ENCODE measurements at regions of chr19 and their contacts with region 1.

Region 1: DNA sequence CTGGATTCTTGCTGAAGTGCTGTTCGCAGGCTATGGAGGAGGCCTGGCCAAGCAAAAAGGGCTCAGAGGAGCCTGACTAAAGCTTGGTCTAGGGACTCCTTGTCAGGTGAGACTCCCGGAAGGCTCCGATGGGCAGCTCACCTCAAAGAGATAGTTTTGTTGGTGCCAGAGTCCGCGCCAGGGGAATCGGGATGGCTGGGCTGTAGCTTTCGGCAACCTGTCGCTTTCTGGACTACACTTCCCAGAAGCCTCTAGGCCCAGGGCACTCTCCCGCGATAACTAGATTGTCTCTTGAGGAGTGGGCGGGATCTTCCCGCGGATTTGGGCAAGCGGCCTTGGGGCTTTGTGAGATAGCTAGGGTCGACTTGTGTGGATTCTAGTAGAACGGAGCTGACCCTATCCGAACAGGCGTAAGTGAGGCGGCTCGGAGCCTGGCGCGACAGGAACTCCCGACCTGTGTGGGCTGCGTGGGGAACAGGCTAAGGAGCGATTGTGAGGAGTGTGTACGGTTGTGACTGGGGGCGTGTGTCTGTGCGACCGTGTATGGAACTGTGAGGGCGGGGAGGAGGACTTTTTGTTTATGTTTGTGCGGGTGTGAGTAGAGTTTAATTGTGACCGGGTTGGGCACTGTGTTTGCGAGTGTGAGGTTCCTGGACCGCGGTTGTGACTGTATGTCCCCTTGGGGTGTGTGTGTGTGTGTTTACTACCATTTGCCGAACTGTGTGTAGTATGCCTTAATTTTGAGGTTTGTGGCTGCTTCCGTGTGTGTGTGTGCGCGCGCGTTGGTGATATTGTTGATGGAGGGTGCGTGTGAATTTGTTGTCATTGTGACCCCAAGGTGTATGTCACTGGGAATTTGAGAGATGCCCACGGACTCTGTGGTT is at the start of gene ZNF345:
- DNase-seq: peak; percentile 93
- ATAC-seq: peak; percentile 82
- H3K4me3 ChIP-seq: peak within 1 kb of the TSS; percentile 92 to 100 (median 93)
- H3K4me3 Mint-ChIP-seq: no peak within 1 kb of the TSS
- H3K27ac ChIP-seq: peak within 1 kb of the TSS; percentile 74 to 84
- H3K27ac Mint-ChIP-seq: no peak within 1 kb of the TSS
- H3K4me1 ChIP-seq: peaks cover 16 to 20% of the 10 kb centered on the region in 2 donors
- H3K4me1 Mint-ChIP-seq: peaks cover 5% of the 10 kb centered on the region
- H3K27me3 ChIP-seq: no peaks in the 10 kb centered on the region
- H3K27me3 Mint-ChIP-seq: no peaks in the 10 kb centered on the region
- CTCF ChIP-seq: no peak
- total RNA-seq, gene ZNF345: 17.7 and 19.5 TPM in 2 replicates

Region 2: DNA sequence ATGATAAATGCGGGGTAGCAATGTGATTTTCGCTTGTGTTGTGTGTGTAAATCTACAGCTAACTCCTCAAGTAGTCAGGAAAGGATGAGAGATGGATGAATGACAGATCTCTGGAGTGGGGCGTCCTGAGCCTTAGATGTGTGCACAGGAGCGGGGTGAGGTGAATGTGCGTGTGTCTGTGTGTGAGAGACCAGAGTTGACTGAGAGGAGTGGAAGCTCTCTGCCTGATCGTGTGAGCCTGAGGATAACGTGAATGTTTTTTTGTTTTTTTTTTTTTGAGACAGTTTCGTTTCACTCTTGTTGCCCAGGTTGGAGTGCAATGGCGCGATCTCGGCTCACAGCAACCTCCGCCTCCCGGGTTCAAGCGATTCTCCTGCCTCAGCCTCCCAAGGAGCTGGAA is 185.0 kb before region 1 on chr19:
- CTCF ChIA-PET with region 1: no interaction called
- POLR2A ChIA-PET with region 1: no interaction called
- intact Hi-C with region 1: loop called (anchors 1 kb)
- DNase-seq: peak; percentile 31
- ATAC-seq: no peak
- H3K4me3 ChIP-seq: peak overlapping the region; percentile 63 to 91 (median 80)
- H3K4me3 Mint-ChIP-seq: peak overlapping the region; percentile 98
- H3K27ac ChIP-seq: peak overlapping the region in 1 of 2 donors; percentile 81
- H3K27ac Mint-ChIP-seq: peak overlapping the region; percentile 90
- H3K4me1 ChIP-seq: peaks cover 15 to 19% of the 10 kb centered on the region in 2 donors
- H3K4me1 Mint-ChIP-seq: peaks cover 28% of the 10 kb centered on the region
- H3K27me3 ChIP-seq: no peaks in the 10 kb centered on the region
- H3K27me3 Mint-ChIP-seq: no peaks in the 10 kb centered on the region
- CTCF ChIP-seq: no peak

Region 3: GRCh38 chr19:36796076-36796992 is 54.5 kb before region 1 on chr19:
- CTCF ChIA-PET with region 1: interaction called, 3 read pairs
- POLR2A ChIA-PET with region 1: no interaction called
- intact Hi-C with region 1: loop called (anchors 1 kb)
- DNase-seq: no peak
- ATAC-seq: no peak
- H3K4me3 ChIP-seq: peak overlapping the region; percentile 63 to 91 (median 84)
- H3K4me3 Mint-ChIP-seq: peak overlapping the region; percentile 95
- H3K27ac ChIP-seq: peak overlapping the region; percentile 86 to 90
- H3K27ac Mint-ChIP-seq: peak overlapping the region; percentile 99
- H3K4me1 ChIP-seq: peaks cover 0 to 17% of the 10 kb centered on the region in 2 donors
- H3K4me1 Mint-ChIP-seq: peaks cover 25% of the 10 kb centered on the region
- H3K27me3 ChIP-seq: peaks cover 0 to 6% (median 0%) of the 10 kb centered on the region in 4 experiments
- H3K27me3 Mint-ChIP-seq: peaks cover 7% of the 10 kb centered on the region
- CTCF ChIP-seq: no peak

Region 4: GRCh38 chr19:36915992-36916830 is 65.4 kb after region 1 on chr19 and contains the starts of genes ZNF568 and ZNF829:
- CTCF ChIA-PET with region 1: no interaction called
- POLR2A ChIA-PET with region 1: no interaction called
- intact Hi-C with region 1: loop called (anchors 1 kb)
- DNase-seq: peak; percentile 96
- ATAC-seq: peak; percentile 89
- H3K4me3 ChIP-seq: peak within 1 kb of the TSS; percentile 77 to 90 (median 86)
- H3K4me3 Mint-ChIP-seq: peak within 1 kb of the TSS; percentile 96
- H3K27ac ChIP-seq: peak within 1 kb of the TSS; percentile 86 to 95
- H3K27ac Mint-ChIP-seq: peak within 1 kb of the TSS; percentile 95
- H3K4me1 ChIP-seq: peaks cover 11 to 12% of the 10 kb centered on the region in 2 donors
- H3K4me1 Mint-ChIP-seq: peaks cover 24% of the 10 kb centered on the region
- H3K27me3 ChIP-seq: no peaks in the 10 kb centered on the region
- H3K27me3 Mint-ChIP-seq: no peaks in the 10 kb centered on the region
- CTCF ChIP-seq: peak; percentile 81
- total RNA-seq, gene ZNF568: 19.4 and 21.1 TPM in 2 replicates
- total RNA-seq, gene ZNF829: 8.4 and 9.6 TPM in 2 replicates

Region 5: GRCh38 chr19:37172368-37173366 is 321.9 kb after region 1 on chr19 and contains the start of gene ZNF585A:
- CTCF ChIA-PET with region 1: no interaction called
- POLR2A ChIA-PET with region 1: no interaction called
- intact Hi-C with region 1: loop called (anchors 1 kb)
- DNase-seq: peak; percentile 96
- ATAC-seq: peak; percentile 100
- H3K4me3 ChIP-seq: peak within 1 kb of the TSS; percentile 72 to 96 (median 82)
- H3K4me3 Mint-ChIP-seq: no peak within 1 kb of the TSS
- H3K27ac ChIP-seq: peak within 1 kb of the TSS; percentile 70 to 89
- H3K27ac Mint-ChIP-seq: no peak within 1 kb of the TSS
- H3K4me1 ChIP-seq: peaks cover 5 to 7% of the 10 kb centered on the region in 2 donors
- H3K4me1 Mint-ChIP-seq: peaks cover 3% of the 10 kb centered on the region
- H3K27me3 ChIP-seq: no peaks in the 10 kb centered on the region
- H3K27me3 Mint-ChIP-seq: no peaks in the 10 kb centered on the region
- CTCF ChIP-seq: peak; percentile 23
- total RNA-seq, gene ZNF585A: 20.0 and 22.0 TPM in 2 replicates

Region 6: GRCh38 chr19:37227996-37228395 is 377.2 kb after region 1 on chr19:
- CTCF ChIA-PET with region 1: no interaction called
- POLR2A ChIA-PET with region 1: no interaction called
- intact Hi-C with region 1: no loop called
- DNase-seq: peak; percentile 30
- ATAC-seq: no peak
- H3K4me3 ChIP-seq: no peak overlapping the region
- H3K4me3 Mint-ChIP-seq: no peak overlapping the region
- H3K27ac ChIP-seq: no peak overlapping the region
- H3K27ac Mint-ChIP-seq: no peak overlapping the region
- H3K4me1 ChIP-seq: no peaks in the 10 kb centered on the region
- H3K4me1 Mint-ChIP-seq: no peaks in the 10 kb centered on the region
- H3K27me3 ChIP-seq: no peaks in the 10 kb centered on the region
- H3K27me3 Mint-ChIP-seq: no peaks in the 10 kb centered on the region
- CTCF ChIP-seq: peak; percentile 51